ENCODE measurements at regions of chr6 and their contacts with region 1.

Region 1: DNA sequence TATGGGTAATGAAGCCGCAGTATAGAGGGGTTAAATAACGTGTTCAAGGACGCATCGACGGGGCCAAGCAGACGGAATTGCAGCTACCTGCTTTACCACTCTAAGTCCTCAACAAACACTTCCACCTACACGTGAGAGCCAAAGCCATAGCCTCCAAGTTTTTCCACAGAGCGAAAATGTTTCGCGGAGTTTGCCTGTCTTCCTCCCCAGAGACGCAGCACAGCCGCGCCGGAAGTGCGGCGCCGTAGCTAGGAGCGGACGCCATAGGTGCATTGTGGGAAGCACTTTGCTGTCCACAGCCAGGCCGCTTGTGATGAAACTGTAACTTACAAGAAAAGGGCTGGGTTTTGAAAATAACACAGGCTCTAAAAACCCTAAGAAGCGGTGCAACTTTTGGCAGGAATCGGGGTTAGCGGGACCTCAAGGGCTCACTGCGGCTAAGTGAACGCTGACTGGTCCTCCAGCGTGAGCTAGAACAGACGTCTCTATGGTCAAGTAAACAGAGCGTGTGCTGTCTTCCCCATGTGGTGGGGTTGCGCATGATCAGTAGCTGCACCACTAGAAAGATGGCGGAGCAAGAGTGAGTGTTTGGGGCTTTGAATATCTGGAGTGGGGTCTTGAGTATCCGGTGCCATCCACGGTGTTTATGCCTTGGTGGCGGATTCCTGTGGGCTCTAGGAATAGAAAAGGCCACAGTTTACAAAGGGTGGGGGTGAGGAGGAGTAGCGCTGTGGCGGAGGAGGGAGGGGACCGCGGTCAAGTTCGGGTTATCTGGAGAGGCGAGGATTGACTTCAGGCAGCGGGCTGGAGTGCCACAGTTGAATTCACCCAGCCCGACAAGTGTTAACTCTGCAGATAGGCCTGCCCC is at the start of gene RPL7L1:
- DNase-seq: peak; percentile 74

Region 2: GRCh38 chr6:42563697-42564505 is 315.7 kb before region 1 on chr6 and contains the start of gene UBR2:
- CTCF ChIA-PET with region 1: no interaction called
- POLR2A ChIA-PET with region 1: interaction called, 12 read pairs
- DNase-seq: peak; percentile 91

Region 3: GRCh38 chr6:42726485-42727086 is 153.0 kb before region 1 on chr6:
- CTCF ChIA-PET with region 1: no interaction called
- POLR2A ChIA-PET with region 1: interaction called, 16 read pairs
- DNase-seq: peak; percentile 76

Region 4: GRCh38 chr6:42782622-42783176 is 96.9 kb before region 1 on chr6:
- CTCF ChIA-PET with region 1: no interaction called
- POLR2A ChIA-PET with region 1: interaction called, 21 read pairs
- DNase-seq: peak; percentile 66

Region 5: GRCh38 chr6:42890311-42891198 is 10.9 kb after region 1 on chr6:
- CTCF ChIA-PET with region 1: interaction called, 8 read pairs
- POLR2A ChIA-PET with region 1: interaction called, 15 read pairs
- DNase-seq: peak; percentile 86

Measured in HEK293T (cell line).